RWPE1 (cell line): ENCODE measurements at regions of chr10 and their contacts with region 1.

Region 1: DNA sequence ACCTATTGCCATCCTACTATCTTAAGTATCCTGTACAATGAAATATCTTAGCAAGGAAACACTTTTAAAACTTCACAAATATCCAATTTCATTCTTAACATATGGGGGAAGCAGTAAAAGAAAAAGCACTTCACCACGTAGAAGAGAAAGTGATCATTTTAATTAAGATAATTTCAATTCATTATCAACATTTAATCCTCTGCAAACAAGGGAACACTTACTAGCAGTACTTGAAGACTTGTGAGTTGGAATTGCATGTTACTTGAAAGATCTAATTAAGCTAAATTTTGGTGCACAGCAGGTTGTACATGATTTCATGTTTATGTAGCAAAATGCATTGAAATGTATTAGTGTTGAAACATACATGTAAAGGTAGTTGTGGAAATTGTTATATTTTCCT is 20.8 kb upstream of the CCAR1 start:
- DNase-seq: no peak
- H3K27ac ChIP-seq: no peak overlapping the region
- CTCF ChIP-seq: no peak

Region 2: GRCh38 chr10:69876931-69877330 is 1176.7 kb after region 1 on chr10:
- CTCF ChIA-PET with region 1: no interaction called
- POLR2A ChIA-PET with region 1: interaction called, 13 read pairs
- DNase-seq: no peak
- H3K27ac ChIP-seq: no peak overlapping the region
- CTCF ChIP-seq: no peak